Activated T-helper 1 cell treated with anti-CD3 and anti-CD28 coated beads, Interleukin-12 subunit alpha, Interleukin-12 subunit beta, Interleukin-2, Interleukin-4 antibody, amounts not matched to agents 30 ng/mL and 10 ng/mL and 1 ng/mL, durations not matched to agents 14 hours and 24 hours and 36 hours (primary cell): ENCODE measurements at regions of chr2 and their contacts with region 1.

Region 1: DNA sequence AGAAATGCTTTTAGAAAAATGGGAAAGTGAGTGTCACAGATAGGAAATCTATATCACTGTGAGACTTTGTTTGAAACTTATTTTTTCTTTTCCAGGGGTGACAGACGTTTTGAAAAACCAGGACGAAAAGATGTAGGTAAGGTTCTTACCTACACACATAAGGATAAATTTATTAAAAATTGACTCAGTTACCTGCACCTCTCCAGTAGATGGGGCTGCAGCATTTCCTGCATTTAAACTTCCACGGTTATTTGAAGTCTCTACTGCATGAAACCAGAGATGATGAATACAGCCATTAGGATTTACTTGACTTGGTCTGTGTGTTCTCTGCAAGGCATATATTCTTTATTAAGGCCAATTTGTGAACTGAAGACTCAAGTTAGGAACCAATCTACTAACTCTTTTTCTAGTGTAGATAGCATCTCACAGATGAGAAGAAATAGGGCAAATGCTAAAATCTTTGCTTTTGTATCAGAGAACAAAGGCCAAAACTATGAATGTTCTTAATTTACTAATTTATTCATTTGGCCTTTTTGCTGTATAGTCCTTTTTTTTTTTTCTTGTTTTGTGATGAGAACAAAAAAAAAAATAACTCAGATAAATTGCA is 15.0 kb downstream of the KCNJ13 start:
- DNase-seq: peak; percentile 12
- H3K4me3 Mint-ChIP-seq: no peak overlapping the region
- H3K27ac Mint-ChIP-seq: no peak overlapping the region
- H3K4me1 Mint-ChIP-seq: peaks cover 31% of the 10 kb centered on the region
- H3K27me3 Mint-ChIP-seq: no peaks in the 10 kb centered on the region

Region 2: GRCh38 chr2:232833830-232834229 is 72.4 kb after region 1 on chr2:
- intact Hi-C with region 1: no loop called
- DNase-seq: no peak
- H3K4me3 Mint-ChIP-seq: no peak overlapping the region
- H3K27ac Mint-ChIP-seq: peak overlapping the region; percentile 57
- H3K4me1 Mint-ChIP-seq: peaks cover 21% of the 10 kb centered on the region
- H3K27me3 Mint-ChIP-seq: no peaks in the 10 kb centered on the region

Region 3: DNA sequence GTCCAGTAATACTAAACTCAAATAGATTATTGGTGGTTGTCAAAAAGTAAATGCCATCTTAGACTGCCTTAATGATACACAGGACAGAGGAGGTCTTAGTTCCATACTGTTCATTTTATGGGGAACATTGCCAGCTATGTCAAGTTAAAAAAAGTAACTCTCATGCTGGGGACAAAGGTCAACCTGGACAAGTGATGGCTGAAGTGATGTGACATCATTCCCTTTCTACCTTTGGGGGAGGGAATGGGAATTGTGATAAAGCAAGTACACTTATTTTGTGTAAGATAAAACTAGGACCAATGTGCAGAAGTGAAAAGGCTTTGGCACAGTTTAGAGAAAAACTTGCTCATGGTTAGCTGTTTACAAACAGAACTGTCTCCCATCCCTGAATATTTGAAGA is 84.7 kb after region 1 on chr2:
- intact Hi-C with region 1: loop called (anchors 5 kb)
- DNase-seq: no peak
- H3K4me3 Mint-ChIP-seq: no peak overlapping the region
- H3K27ac Mint-ChIP-seq: no peak overlapping the region
- H3K4me1 Mint-ChIP-seq: no peaks in the 10 kb centered on the region
- H3K27me3 Mint-ChIP-seq: no peaks in the 10 kb centered on the region

Region 4: GRCh38 chr2:233029321-233029720 is 267.9 kb after region 1 on chr2:
- intact Hi-C with region 1: loop called (anchors 1 kb)
- DNase-seq: no peak
- H3K4me3 Mint-ChIP-seq: no peak overlapping the region
- H3K27ac Mint-ChIP-seq: no peak overlapping the region
- H3K4me1 Mint-ChIP-seq: no peaks in the 10 kb centered on the region
- H3K27me3 Mint-ChIP-seq: peaks cover 2% of the 10 kb centered on the region

Region 5: DNA sequence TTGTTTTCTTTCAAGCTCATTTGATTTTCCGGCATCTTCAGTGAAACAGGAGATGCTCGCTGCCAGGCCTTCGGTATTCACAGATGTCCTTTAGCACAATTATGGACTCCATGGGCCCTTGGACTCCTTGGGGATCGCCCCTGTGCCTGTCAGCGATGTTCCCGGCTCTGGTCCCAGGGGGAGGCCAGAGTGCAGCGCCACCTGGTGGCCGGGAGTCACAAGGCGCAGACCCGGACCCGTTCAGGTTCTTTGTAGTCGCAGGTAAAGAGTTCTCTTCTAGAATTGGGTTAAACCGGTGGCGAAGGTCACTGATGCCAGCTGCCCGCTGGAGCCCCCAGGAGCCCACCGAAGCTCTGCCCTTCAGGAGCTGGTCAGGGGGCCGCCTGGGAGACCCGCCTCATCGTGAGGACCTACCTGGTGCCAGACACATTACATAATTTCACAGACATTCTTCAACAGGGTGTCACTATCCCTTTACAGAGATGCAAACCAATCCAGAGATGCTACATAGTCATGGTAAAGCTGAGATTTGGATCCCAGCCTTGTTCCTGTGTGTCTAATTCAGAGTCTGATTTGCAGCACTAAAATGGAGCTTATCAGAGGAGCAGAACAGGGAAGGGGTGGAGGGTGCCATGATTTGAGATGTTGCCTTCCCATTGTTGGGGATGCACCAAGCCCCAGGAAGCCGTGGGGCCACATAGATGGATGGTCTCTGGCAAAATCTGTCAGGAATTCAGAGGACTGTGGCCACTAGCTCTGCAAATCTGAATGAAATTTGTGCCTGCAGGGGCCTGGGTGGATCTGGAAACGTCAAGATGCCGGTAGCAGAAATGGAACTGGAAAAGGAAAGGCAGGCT is 292.8 kb after region 1 on chr2:
- intact Hi-C with region 1: no loop called
- DNase-seq: peak; percentile 52
- H3K4me3 Mint-ChIP-seq: no peak overlapping the region
- H3K27ac Mint-ChIP-seq: no peak overlapping the region
- H3K4me1 Mint-ChIP-seq: peaks cover 18% of the 10 kb centered on the region
- H3K27me3 Mint-ChIP-seq: peaks cover 25% of the 10 kb centered on the region